ENCODE measurements at regions of chr16 and their contacts with region 1.

Region 1: DNA sequence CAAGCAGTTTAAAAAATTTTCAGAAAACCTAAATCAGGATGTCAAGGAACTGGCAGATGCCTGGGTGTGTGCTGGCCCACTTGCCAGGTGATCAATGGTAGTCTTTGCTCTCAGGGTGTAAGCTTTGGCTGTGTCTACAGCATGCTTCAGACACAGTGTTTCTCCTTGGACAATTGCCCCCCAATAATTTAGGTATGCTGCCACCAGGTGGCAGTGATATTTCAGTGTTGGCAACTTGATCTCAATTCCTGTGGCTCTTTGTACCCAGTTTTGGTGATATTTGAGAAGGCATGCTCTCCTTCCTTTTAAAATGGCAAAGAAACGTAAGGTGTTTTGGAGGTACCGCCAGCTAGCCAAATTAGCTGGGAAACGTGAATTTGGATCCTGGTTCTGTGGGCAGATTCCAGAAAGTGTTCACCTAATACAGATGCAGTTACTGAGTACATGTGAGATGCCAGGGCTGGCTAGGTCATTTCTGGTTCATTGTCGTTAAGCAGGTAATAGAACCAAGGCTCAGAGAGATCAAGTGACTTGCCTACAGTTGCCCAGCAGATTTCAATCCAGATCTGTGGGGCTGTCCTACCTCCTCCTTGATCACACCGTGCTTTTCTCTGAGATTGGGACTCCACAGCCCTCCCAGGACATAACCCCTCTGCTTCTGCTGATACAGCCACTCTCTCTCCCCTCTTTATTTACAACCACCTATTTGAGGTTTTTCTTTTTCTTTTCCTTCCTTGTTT is 155.6 kb upstream of the PLCG2 start:
- DNase-seq: no peak
- H3K4me3 ChIP-seq: no peak overlapping the region
- H3K27ac ChIP-seq: no peak overlapping the region
- H3K4me1 ChIP-seq: peaks cover 0 to 3% (median 1%) of the 10 kb centered on the region in 4 experiments; a peak in 3 of 7 replicates
- H3K27me3 ChIP-seq: no peaks in the 10 kb centered on the region
- CTCF ChIP-seq: peak in 2 of 3 experiments; percentile 67 to 69; a peak in 3 of 4 replicates
- EP300 ChIP-seq: no peak
- POLR2A ChIP-seq: no peak
- RAD21 ChIP-seq: peak; percentile 82 to 83

Region 2: GRCh38 chr16:81231014-81231413 is 392.5 kb before region 1 on chr16:
- CTCF ChIA-PET with region 1: no interaction called
- POLR2A ChIA-PET with region 1: no interaction called
- DNase-seq: no peak
- H3K4me3 ChIP-seq: no peak overlapping the region
- H3K27ac ChIP-seq: no peak overlapping the region
- H3K4me1 ChIP-seq: no peaks in the 10 kb centered on the region
- H3K27me3 ChIP-seq: 0 out of 7 replicates have a peak, but pooled peaks cover 0 to 2% (median 0%) of the 10 kb centered on the region in 4 experiments
- CTCF ChIP-seq: no peak
- EP300 ChIP-seq: no peak
- POLR2A ChIP-seq: no peak
- RAD21 ChIP-seq: no peak

Region 3: GRCh38 chr16:81600275-81600674 is 23.3 kb before region 1 on chr16:
- CTCF ChIA-PET with region 1: interaction called, 14 read pairs
- POLR2A ChIA-PET with region 1: no interaction called
- DNase-seq: no peak
- H3K4me3 ChIP-seq: no peak overlapping the region
- H3K27ac ChIP-seq: no peak overlapping the region
- H3K4me1 ChIP-seq: peaks cover 0 to 5% (median 4%) of the 10 kb centered on the region in 4 experiments; a peak in 3 of 7 replicates
- H3K27me3 ChIP-seq: no peaks in the 10 kb centered on the region
- CTCF ChIP-seq: no peak
- EP300 ChIP-seq: no peak
- POLR2A ChIP-seq: no peak
- RAD21 ChIP-seq: no peak

Region 4: GRCh38 chr16:81652798-81653505 is 29.4 kb after region 1 on chr16:
- CTCF ChIA-PET with region 1: interaction called, 21 read pairs
- POLR2A ChIA-PET with region 1: no interaction called
- DNase-seq: no peak
- H3K4me3 ChIP-seq: peak overlapping the region in 1 of 4 experiments; percentile 9; a peak in 1 of 8 replicates
- H3K27ac ChIP-seq: peak overlapping the region; percentile 14; the same call in 1 of the 2 replicates
- H3K4me1 ChIP-seq: peaks cover 7 to 23% (median 17%) of the 10 kb centered on the region in 4 experiments
- H3K27me3 ChIP-seq: no peaks in the 10 kb centered on the region
- CTCF ChIP-seq: no peak
- EP300 ChIP-seq: no peak
- POLR2A ChIP-seq: no peak
- RAD21 ChIP-seq: no peak

Region 5: GRCh38 chr16:81723098-81723723 is 99.7 kb after region 1 on chr16:
- CTCF ChIA-PET with region 1: interaction called, 10 read pairs
- POLR2A ChIA-PET with region 1: no interaction called
- DNase-seq: no peak
- H3K4me3 ChIP-seq: no peak overlapping the region
- H3K27ac ChIP-seq: no peak overlapping the region
- H3K4me1 ChIP-seq: no peaks in the 10 kb centered on the region; a peak in 2 of 7 replicates
- H3K27me3 ChIP-seq: no peaks in the 10 kb centered on the region
- CTCF ChIP-seq: peak in 2 of 3 experiments; percentile 73 to 74; a peak in 3 of 4 replicates
- EP300 ChIP-seq: no peak
- POLR2A ChIP-seq: no peak
- RAD21 ChIP-seq: peak; percentile 90 to 92